GM13977 (cell line): ENCODE measurements at regions of chr3 and their contacts with region 1.

Region 1: GRCh38 chr3:88203642-88204055 is 53.9 kb downstream of the C3orf38 start:
- DNase-seq: peak; percentile 48
- CTCF ChIP-seq: peak; percentile 87

Region 2: GRCh38 chr3:89107461-89108290 is 904.0 kb after region 1 on chr3 and contains the start of gene EPHA3:
- in situ Hi-C with region 1: loop called (anchors 25 kb)
- DNase-seq: peak; percentile 56
- CTCF ChIP-seq: no peak

Region 3: GRCh38 chr3:90091204-90091924 is 1887.7 kb after region 1 on chr3:
- in situ Hi-C with region 1: loop called (anchors 25 kb)
- DNase-seq: no peak
- CTCF ChIP-seq: peak; percentile 41